SK-N-SH (cell line): ENCODE measurements at regions of chr12 and their contacts with region 1.

Region 1: GRCh38 chr12:27434673-27435565 is 11.6 kb upstream of the SMCO2 start:
- DNase-seq: peak; percentile 54
- H3K4me3 ChIP-seq: no peak overlapping the region
- H3K27ac ChIP-seq: 0 out of 4 replicates have a peak overlapping the region, but pooled peaks of 1 of the 2 experiments have one; percentile 4
- H3K4me1 ChIP-seq: no peaks in the 10 kb centered on the region; a peak in 2 of 4 replicates
- H3K27me3 ChIP-seq: no peaks in the 10 kb centered on the region
- CTCF ChIP-seq: peak; percentile 57
- EP300 ChIP-seq: no peak
- RAD21 ChIP-seq: peak; percentile 48

Region 2: GRCh38 chr12:27198036-27198435 is 236.9 kb before region 1 on chr12:
- CTCF ChIA-PET with region 1: no interaction called
- POLR2A ChIA-PET with region 1: no interaction called
- DNase-seq: no peak
- H3K4me3 ChIP-seq: no peak overlapping the region
- H3K27ac ChIP-seq: no peak overlapping the region
- H3K4me1 ChIP-seq: peaks cover 7 to 9% of the 10 kb centered on the region in 2 experiments; a peak in 3 of 4 replicates
- H3K27me3 ChIP-seq: no peaks in the 10 kb centered on the region
- CTCF ChIP-seq: no peak
- EP300 ChIP-seq: no peak
- RAD21 ChIP-seq: no peak

Region 3: DNA sequence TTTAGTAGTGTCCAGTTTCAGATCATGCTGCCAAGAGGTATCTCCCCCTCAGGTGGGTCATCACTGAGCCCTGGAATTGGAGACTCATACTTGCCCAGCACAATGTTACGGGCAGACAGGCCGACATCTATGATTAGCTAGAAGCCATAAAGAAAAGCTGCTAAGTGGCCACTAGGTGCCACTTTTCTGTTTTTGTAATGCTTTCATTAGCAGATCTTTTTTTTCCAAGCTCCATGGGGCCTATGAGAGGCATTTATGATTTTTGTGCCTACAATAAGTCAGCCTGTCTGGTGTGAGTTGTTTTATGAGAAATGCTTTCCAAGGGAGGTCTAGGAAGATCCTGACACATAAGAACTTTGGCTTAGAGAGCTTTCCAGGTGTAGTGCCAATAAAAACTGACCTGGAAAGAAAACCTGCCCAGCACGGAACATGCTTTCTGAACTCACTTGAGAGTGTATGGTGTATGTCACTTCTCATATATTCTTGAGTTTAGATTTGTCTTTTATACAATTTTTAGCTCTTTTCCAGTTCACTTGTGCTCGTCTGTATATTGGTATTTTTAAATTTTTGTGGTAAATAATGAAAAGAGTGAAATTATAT is 10.2 kb before region 1 on chr12:
- CTCF ChIA-PET with region 1: interaction called, 18 read pairs
- POLR2A ChIA-PET with region 1: no interaction called
- DNase-seq: peak; percentile 19
- H3K4me3 ChIP-seq: no peak overlapping the region
- H3K27ac ChIP-seq: no peak overlapping the region
- H3K4me1 ChIP-seq: no peaks in the 10 kb centered on the region; a peak in 1 of 4 replicates
- H3K27me3 ChIP-seq: no peaks in the 10 kb centered on the region
- CTCF ChIP-seq: peak; percentile 63
- EP300 ChIP-seq: no peak
- RAD21 ChIP-seq: peak; percentile 62

Region 4: DNA sequence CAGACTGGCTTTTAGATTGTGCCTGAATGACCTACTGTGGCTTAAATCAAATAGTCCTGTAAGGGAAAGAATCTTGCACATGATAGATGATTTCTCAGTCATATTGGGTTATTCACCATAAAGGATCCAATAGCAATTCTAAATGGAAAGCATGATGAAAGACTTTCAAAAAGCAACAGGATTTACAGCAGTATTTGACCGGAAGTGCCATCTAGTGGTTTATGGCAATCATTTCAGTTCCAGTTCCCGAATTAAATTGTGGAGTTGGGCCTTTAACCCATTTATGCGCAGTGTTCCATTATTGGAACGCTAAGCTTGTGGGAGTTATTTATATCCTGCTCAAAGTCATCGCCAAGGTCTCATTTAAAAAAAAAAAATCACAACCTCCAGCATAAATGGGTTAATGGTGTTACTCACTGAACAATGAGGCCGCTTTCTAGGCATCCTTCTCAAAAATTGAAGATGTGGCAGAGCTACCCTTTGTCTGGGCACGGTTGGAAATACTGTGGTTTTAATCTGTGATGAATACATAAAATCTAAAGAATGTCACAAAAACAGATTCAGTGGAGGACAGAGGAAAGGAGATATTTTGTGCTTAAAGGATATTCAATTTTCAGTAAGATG is 200.5 kb after region 1 on chr12:
- CTCF ChIA-PET with region 1: interaction called, 11 read pairs
- POLR2A ChIA-PET with region 1: no interaction called
- DNase-seq: peak; percentile 15
- H3K4me3 ChIP-seq: no peak overlapping the region; a peak in 1 of 4 replicates
- H3K27ac ChIP-seq: peak overlapping the region in 1 of 2 experiments; percentile 29; a peak in 1 of 4 replicates
- H3K4me1 ChIP-seq: 0 out of 4 replicates have a peak, but pooled peaks cover 0 to 7% of the 10 kb centered on the region in 2 experiments
- H3K27me3 ChIP-seq: no peaks in the 10 kb centered on the region
- CTCF ChIP-seq: peak; percentile 70
- EP300 ChIP-seq: no peak
- RAD21 ChIP-seq: peak; percentile 83